Activated CD8-positive, alpha-beta T cell treated with anti-CD3 and anti-CD28 coated beads for 36 hours (primary cell): ENCODE measurements at regions of chr5 and their contacts with region 1.

Region 1: DNA sequence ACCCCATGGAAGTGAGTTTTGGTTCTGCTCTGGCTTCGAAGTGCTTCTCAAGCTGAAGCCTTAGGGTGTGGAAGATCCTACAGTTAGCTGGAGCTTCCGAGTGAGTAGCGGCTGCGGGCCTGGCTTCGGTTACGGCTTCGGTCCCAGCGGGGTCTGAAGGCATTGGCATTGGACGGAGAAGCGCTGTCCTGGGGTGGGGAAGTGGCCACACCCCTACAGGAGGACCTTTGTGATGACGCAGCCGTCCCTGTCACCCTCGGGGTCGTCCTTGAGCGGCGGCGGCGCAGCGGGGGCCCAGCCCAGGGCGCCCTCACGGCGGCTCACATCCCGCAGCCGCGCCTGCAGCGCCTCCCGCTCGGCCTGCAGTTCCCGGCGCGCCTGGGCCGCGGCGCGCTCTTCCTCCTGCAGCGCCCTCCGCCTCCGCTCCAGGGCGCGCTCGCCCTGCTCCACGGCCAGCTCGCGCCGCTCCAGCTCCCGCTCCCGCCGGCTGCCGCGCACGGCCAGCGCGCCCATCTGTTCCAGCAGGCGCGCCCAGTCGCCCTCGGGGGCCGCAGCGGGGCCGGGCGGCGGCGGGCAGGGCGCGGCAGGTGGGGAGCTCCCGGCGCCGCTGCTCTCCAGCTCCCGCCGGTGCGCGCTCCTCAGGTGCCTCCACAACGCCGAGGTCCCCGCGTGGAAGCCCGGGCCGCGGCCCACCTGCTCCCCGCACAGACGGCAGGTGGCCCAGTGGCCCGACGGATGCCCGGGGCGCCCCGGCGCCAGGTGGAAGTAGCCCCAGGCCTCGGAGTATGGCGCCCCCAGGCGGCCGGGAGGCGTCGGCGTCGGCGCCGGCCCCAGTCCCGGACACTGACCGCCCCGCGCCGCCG is 9.9 kb downstream of the ZBED3 start:
- DNase-seq: peak; percentile 70
- ATAC-seq: peak; percentile 87
- H3K4me3 Mint-ChIP-seq: peak overlapping the region; percentile 53
- H3K27ac Mint-ChIP-seq: no peak overlapping the region
- H3K4me1 Mint-ChIP-seq: peaks cover 5% of the 10 kb centered on the region
- H3K27me3 Mint-ChIP-seq: no peaks in the 10 kb centered on the region
- CTCF ChIP-seq: peak; percentile 90

Region 2: GRCh38 chr5:76867827-76868693 is 209.1 kb before region 1 on chr5:
- CTCF ChIA-PET with region 1: interaction called, 17 read pairs
- POLR2A ChIA-PET with region 1: no interaction called
- intact Hi-C with region 1: no loop called
- DNase-seq: peak; percentile 82
- ATAC-seq: peak; percentile 96
- H3K4me3 Mint-ChIP-seq: no peak overlapping the region
- H3K27ac Mint-ChIP-seq: no peak overlapping the region
- H3K4me1 Mint-ChIP-seq: peaks cover 3% of the 10 kb centered on the region
- H3K27me3 Mint-ChIP-seq: no peaks in the 10 kb centered on the region
- CTCF ChIP-seq: peak; percentile 71

Region 3: DNA sequence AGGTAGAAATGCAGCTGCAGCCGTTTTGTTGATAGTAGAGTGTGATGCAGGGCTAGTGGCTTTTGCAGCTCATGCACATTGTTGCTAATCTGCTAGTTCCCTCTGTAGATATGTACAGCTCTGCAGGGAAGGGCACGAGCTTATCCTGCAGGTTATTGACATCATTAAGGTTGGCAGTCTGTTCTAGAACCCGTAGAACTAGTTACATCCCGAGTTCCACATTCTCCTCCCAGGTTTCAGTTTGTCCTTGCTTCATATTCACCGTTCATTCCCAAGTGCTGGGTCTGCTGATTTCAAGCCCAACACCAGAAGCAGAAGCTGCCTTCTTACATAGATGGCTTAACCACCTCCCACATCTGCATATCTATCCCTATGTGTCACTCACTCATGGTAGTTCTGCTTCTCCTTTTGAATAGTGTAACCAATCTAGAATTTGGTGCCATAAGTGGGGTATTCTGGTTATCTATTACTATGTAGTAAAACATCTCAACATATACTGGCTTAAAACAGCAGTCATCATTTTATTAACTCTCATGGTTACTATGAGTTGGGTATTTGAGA is 86.2 kb before region 1 on chr5:
- CTCF ChIA-PET with region 1: no interaction called
- POLR2A ChIA-PET with region 1: no interaction called
- intact Hi-C with region 1: no loop called
- DNase-seq: no peak
- ATAC-seq: no peak
- H3K4me3 Mint-ChIP-seq: no peak overlapping the region
- H3K27ac Mint-ChIP-seq: no peak overlapping the region
- H3K4me1 Mint-ChIP-seq: no peaks in the 10 kb centered on the region
- H3K27me3 Mint-ChIP-seq: no peaks in the 10 kb centered on the region
- CTCF ChIP-seq: no peak

Region 4: GRCh38 chr5:77030097-77031071 is 46.8 kb before region 1 on chr5 and contains the start of gene AGGF1:
- CTCF ChIA-PET with region 1: interaction called, 15 read pairs
- POLR2A ChIA-PET with region 1: interaction called, 3 read pairs
- intact Hi-C with region 1: no loop called
- DNase-seq: peak; percentile 96
- ATAC-seq: peak; percentile 99
- H3K4me3 Mint-ChIP-seq: peak within 1 kb of the TSS; percentile 94
- H3K27ac Mint-ChIP-seq: peak within 1 kb of the TSS; percentile 94
- H3K4me1 Mint-ChIP-seq: peaks cover 29% of the 10 kb centered on the region
- H3K27me3 Mint-ChIP-seq: no peaks in the 10 kb centered on the region
- CTCF ChIP-seq: no peak
- total RNA-seq, gene AGGF1: 27.7 to 33.5 TPM

Region 5: DNA sequence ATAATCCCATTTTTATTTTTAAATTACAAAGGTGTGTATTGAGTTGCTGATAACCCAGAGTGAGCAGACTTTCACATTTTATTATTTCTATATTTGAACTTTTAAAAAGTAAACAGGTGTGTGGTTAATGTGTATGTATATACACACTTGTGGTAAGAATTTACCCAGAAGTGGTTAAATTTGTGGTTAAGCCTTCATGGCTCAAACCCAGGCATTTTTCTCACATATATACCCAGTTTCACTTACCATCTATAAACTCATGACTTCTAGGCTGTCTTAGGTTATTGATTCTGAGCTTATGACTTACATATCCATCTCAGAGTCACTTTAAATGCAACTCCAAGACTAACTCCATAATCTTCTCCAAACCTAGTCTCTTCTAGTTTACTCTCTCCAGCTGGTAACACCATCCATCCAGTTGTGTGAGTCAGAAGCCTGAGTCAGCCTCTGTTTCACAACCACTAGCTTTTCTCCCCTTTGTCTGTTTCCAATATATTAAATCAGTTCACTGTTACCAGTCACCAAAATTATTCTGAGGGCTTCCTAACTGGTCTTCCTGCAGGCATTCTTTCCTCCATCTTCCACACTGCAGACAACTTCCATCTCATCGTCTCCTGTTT is 10.3 kb before region 1 on chr5:
- CTCF ChIA-PET with region 1: interaction called, 20 read pairs
- POLR2A ChIA-PET with region 1: no interaction called
- intact Hi-C with region 1: no loop called
- DNase-seq: no peak
- ATAC-seq: no peak
- H3K4me3 Mint-ChIP-seq: no peak overlapping the region
- H3K27ac Mint-ChIP-seq: no peak overlapping the region
- H3K4me1 Mint-ChIP-seq: peaks cover 9% of the 10 kb centered on the region
- H3K27me3 Mint-ChIP-seq: no peaks in the 10 kb centered on the region
- CTCF ChIP-seq: no peak

Region 6: DNA sequence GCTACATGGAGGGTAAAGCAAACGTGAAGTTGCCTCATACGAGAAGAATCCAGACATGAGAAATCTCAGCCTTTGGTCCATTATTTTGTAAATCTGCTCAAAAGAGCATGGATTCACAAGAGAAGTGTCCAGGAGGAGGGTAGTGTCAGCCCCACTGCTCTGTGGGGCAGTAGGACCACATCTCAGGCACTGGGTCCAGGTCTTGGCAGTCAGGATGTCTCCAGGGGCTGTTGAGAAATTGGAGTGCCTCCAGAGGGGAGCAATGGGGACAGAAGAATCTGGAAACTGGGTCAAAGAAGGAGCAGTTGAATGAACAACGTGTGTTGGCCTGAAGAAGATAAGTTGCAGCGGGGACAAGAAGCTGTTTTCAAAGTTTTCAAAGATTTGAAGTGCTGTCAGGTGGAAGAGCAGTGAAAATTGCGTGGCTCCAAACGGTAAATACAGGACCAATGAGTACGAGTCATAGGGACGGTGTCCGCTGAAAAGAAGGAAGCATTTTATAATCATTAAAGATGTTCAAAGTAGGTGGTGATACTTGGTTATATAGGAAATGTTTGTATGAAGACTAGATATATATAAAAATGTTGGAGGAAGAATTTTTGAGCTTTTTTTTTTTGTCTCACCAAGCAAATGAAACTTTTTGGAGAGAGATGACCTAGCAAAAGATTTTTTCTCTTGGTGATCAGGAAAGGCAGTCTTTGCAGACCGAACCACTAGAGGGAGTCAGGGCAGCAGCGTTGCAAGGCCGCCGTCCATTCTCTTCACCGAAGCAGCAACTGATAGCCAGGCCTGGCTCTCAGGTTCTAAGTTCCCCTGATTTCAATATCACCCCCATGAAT is 67.0 kb after region 1 on chr5:
- CTCF ChIA-PET with region 1: interaction called, 10 read pairs
- POLR2A ChIA-PET with region 1: no interaction called
- intact Hi-C with region 1: no loop called
- DNase-seq: peak; percentile 77
- ATAC-seq: peak; percentile 79
- H3K4me3 Mint-ChIP-seq: no peak overlapping the region
- H3K27ac Mint-ChIP-seq: no peak overlapping the region
- H3K4me1 Mint-ChIP-seq: peaks cover 5% of the 10 kb centered on the region
- H3K27me3 Mint-ChIP-seq: peaks cover 1% of the 10 kb centered on the region
- CTCF ChIP-seq: peak; percentile 79

Region 7: GRCh38 chr5:77192444-77193050 is 115.4 kb after region 1 on chr5:
- CTCF ChIA-PET with region 1: no interaction called
- POLR2A ChIA-PET with region 1: no interaction called
- intact Hi-C with region 1: no loop called
- DNase-seq: no peak
- ATAC-seq: no peak
- H3K4me3 Mint-ChIP-seq: no peak overlapping the region
- H3K27ac Mint-ChIP-seq: no peak overlapping the region
- H3K4me1 Mint-ChIP-seq: no peaks in the 10 kb centered on the region
- H3K27me3 Mint-ChIP-seq: peaks cover 2% of the 10 kb centered on the region
- CTCF ChIP-seq: no peak

Region 8: GRCh38 chr5:77356740-77357139 is 279.5 kb after region 1 on chr5:
- CTCF ChIA-PET with region 1: no interaction called
- POLR2A ChIA-PET with region 1: no interaction called
- intact Hi-C with region 1: no loop called
- DNase-seq: peak; percentile 72
- ATAC-seq: peak; percentile 97
- H3K4me3 Mint-ChIP-seq: no peak overlapping the region
- H3K27ac Mint-ChIP-seq: peak overlapping the region; percentile 23
- H3K4me1 Mint-ChIP-seq: peaks cover 11% of the 10 kb centered on the region
- H3K27me3 Mint-ChIP-seq: peaks cover 2% of the 10 kb centered on the region
- CTCF ChIP-seq: no peak

Region 9: GRCh38 chr5:77491783-77492652 is 414.8 kb after region 1 on chr5 and contains the start of gene WDR41:
- CTCF ChIA-PET with region 1: interaction called, 10 read pairs
- POLR2A ChIA-PET with region 1: interaction called, 4 read pairs
- intact Hi-C with region 1: no loop called
- DNase-seq: peak; percentile 92
- ATAC-seq: peak; percentile 90
- H3K4me3 Mint-ChIP-seq: peak within 1 kb of the TSS; percentile 79
- H3K27ac Mint-ChIP-seq: peak within 1 kb of the TSS; percentile 90
- H3K4me1 Mint-ChIP-seq: peaks cover 20% of the 10 kb centered on the region
- H3K27me3 Mint-ChIP-seq: peaks cover 3% of the 10 kb centered on the region
- CTCF ChIP-seq: peak; percentile 89
- total RNA-seq, gene WDR41: 24.3 to 27.4 TPM